Colonic mucosa (tissue), 4 donors: ENCODE measurements at regions of chr14 and their contacts with region 1.

Region 1: GRCh38 chr14:80202888-80203562 is 8.3 kb downstream of the DIO2 start:
- DNase-seq: peak; percentile 39
- H3K4me3 ChIP-seq: no peak overlapping the region
- H3K27ac ChIP-seq: no peak overlapping the region
- H3K4me1 ChIP-seq: no peaks in the 10 kb centered on the region
- H3K27me3 ChIP-seq: no peaks in the 10 kb centered on the region
- CTCF ChIP-seq: peak; percentile 10

Region 2: GRCh38 chr14:78974691-78975090 is 1228.3 kb before region 1 on chr14:
- intact Hi-C with region 1: loop called (anchors 10 kb)
- DNase-seq: no peak
- H3K4me3 ChIP-seq: no peak overlapping the region
- H3K27ac ChIP-seq: no peak overlapping the region
- H3K4me1 ChIP-seq: no peaks in the 10 kb centered on the region
- H3K27me3 ChIP-seq: no peaks in the 10 kb centered on the region
- CTCF ChIP-seq: no peak

Region 3: GRCh38 chr14:80350707-80351106 is 147.7 kb after region 1 on chr14:
- intact Hi-C with region 1: no loop called
- DNase-seq: no peak
- H3K4me3 ChIP-seq: no peak overlapping the region
- H3K27ac ChIP-seq: no peak overlapping the region
- H3K4me1 ChIP-seq: no peaks in the 10 kb centered on the region
- H3K27me3 ChIP-seq: no peaks in the 10 kb centered on the region
- CTCF ChIP-seq: no peak

Region 4: GRCh38 chr14:80845856-80846255 is 642.8 kb after region 1 on chr14:
- intact Hi-C with region 1: loop called (anchors 10 kb)
- DNase-seq: no peak
- H3K4me3 ChIP-seq: no peak overlapping the region
- H3K27ac ChIP-seq: no peak overlapping the region
- H3K4me1 ChIP-seq: no peaks in the 10 kb centered on the region
- H3K27me3 ChIP-seq: no peaks in the 10 kb centered on the region
- CTCF ChIP-seq: no peak